ENCODE measurements at regions of chr1 and their contacts with region 1.

Region 1: DNA sequence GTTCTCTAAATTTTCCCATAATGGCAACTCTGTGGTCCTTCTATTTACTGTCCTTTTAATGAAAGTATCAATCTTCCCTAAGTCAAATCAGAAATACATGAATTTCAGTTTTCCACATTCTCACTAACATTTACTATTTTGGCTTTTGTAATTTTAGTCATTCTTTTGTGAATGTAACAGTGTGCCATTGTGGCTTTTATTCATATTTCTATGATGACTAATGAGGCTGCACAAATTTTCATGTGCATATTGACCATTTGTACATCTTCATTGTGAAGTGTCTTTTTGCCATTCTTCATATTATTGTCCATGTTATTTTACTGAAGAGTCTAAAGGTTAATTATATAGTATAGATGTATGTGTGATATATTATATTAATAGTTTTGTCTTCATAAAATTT is 431.0 kb upstream of the BRINP3 start:
- DNase-seq: peak; percentile 21
- H3K4me3 ChIP-seq: no peak overlapping the region
- H3K27ac ChIP-seq: no peak overlapping the region
- H3K4me1 ChIP-seq: peaks cover 4% of the 10 kb centered on the region
- H3K27me3 ChIP-seq: no peaks in the 10 kb centered on the region
- CTCF ChIP-seq: no peak

Region 2: GRCh38 chr1:190837888-190838287 is 70.8 kb before region 1 on chr1:
- CTCF ChIA-PET with region 1: no interaction called
- dilution Hi-C with region 1: no loop called
- in situ Hi-C with region 1: no loop called
- intact Hi-C with region 1: no loop called
- DNase-seq: no peak
- H3K4me3 ChIP-seq: no peak overlapping the region
- H3K27ac ChIP-seq: no peak overlapping the region
- H3K4me1 ChIP-seq: no peaks in the 10 kb centered on the region
- H3K27me3 ChIP-seq: no peaks in the 10 kb centered on the region
- CTCF ChIP-seq: no peak

Region 3: GRCh38 chr1:190858140-190858539 is 50.6 kb before region 1 on chr1:
- CTCF ChIA-PET with region 1: no interaction called
- dilution Hi-C with region 1: loop called (anchors 5 kb)
- in situ Hi-C with region 1: no loop called
- intact Hi-C with region 1: no loop called
- DNase-seq: no peak
- H3K4me3 ChIP-seq: no peak overlapping the region
- H3K27ac ChIP-seq: no peak overlapping the region
- H3K4me1 ChIP-seq: no peaks in the 10 kb centered on the region
- H3K27me3 ChIP-seq: peaks cover 1% of the 10 kb centered on the region
- CTCF ChIP-seq: no peak

Measured in mammary epithelial cell (primary cell).